Activated CD4-positive, alpha-beta T cell treated with anti-CD3 and anti-CD28 coated beads for 36 hours (primary cell): ENCODE measurements at regions of chrX and their contacts with region 1.

Region 1: DNA sequence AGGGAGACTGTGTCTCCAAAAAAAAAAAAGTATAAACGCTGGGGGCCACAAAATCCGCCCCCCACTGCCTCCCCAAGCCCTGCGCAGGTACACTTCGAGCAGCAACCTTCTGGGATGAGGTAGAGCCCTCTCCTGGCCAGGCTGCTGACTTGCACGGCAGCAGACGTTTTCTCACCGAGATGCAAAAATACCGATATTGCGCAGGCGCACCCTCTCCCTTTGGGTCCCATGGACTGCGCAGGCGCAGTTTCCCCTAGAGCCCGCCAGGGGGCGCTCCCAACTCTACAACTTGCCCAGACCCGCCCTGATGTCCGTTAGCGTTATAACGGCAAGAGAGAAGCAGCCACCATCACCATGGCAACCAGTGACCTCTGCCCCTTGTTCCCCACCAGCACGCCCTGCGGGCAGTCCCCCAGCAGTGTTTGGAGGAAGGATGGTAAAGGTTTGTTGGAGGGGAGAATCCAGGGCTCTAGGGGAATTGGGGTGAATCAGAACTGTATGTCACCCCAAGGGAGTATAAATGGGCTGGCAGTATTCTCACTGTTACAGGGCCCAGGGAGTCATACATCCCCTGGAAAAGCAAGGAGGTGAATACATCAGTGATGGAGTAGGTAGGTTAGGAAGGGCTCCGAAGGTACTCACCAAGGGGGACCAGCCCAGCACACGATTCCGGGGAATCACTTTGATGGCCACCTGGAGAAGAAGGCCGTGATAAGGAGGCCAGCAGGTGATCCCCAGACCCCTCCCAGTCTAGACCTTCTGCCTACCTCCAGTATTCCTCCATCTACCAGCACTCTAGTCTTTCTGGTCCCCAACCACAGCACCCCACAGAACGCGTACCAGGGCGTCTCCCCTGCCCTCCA is 1.5 kb downstream of the PIM2 start:
- DNase-seq: peak; percentile 92
- ATAC-seq: peak; percentile 34
- H3K4me3 Mint-ChIP-seq: peak overlapping the region; percentile 97
- H3K27ac Mint-ChIP-seq: peak overlapping the region; percentile 95
- H3K4me1 Mint-ChIP-seq: peaks cover 51% of the 10 kb centered on the region
- H3K27me3 Mint-ChIP-seq: no peaks in the 10 kb centered on the region

Region 2: GRCh38 chrX:47650164-47651042 is 1267.0 kb before region 1 on chrX and contains the start of gene ELK1:
- CTCF ChIA-PET with region 1: no interaction called
- POLR2A ChIA-PET with region 1: no interaction called
- intact Hi-C with region 1: loop called in 1 of 2 experiments (anchors 10 kb)
- DNase-seq: peak; percentile 93
- ATAC-seq: peak; percentile 95
- H3K4me3 Mint-ChIP-seq: peak within 1 kb of the TSS; percentile 92
- H3K27ac Mint-ChIP-seq: peak within 1 kb of the TSS; percentile 97
- H3K4me1 Mint-ChIP-seq: peaks cover 44% of the 10 kb centered on the region
- H3K27me3 Mint-ChIP-seq: no peaks in the 10 kb centered on the region
- total RNA-seq, gene ELK1: 96.8 to 117 TPM

Region 3: GRCh38 chrX:48676106-48676892 is 241.1 kb before region 1 on chrX:
- CTCF ChIA-PET with region 1: no interaction called
- POLR2A ChIA-PET with region 1: no interaction called
- intact Hi-C with region 1: loop called in 1 of 2 experiments (anchors 10 kb)
- DNase-seq: peak; percentile 92
- ATAC-seq: peak; percentile 95
- H3K4me3 Mint-ChIP-seq: peak overlapping the region; percentile 90
- H3K27ac Mint-ChIP-seq: peak overlapping the region; percentile 91
- H3K4me1 Mint-ChIP-seq: peaks cover 19% of the 10 kb centered on the region
- H3K27me3 Mint-ChIP-seq: no peaks in the 10 kb centered on the region

Region 4: GRCh38 chrX:48776818-48777439 is 140.4 kb before region 1 on chrX:
- CTCF ChIA-PET with region 1: no interaction called
- POLR2A ChIA-PET with region 1: no interaction called
- intact Hi-C with region 1: no loop called
- DNase-seq: no peak
- ATAC-seq: no peak
- H3K4me3 Mint-ChIP-seq: no peak overlapping the region
- H3K27ac Mint-ChIP-seq: no peak overlapping the region
- H3K4me1 Mint-ChIP-seq: no peaks in the 10 kb centered on the region
- H3K27me3 Mint-ChIP-seq: no peaks in the 10 kb centered on the region

Region 5: GRCh38 chrX:48897621-48898306 is 19.6 kb before region 1 on chrX and contains the starts of genes PQBP1 and TIMM17B:
- CTCF ChIA-PET with region 1: interaction called, 4 read pairs
- POLR2A ChIA-PET with region 1: interaction called, 14 read pairs
- intact Hi-C with region 1: loop called (anchors 1 kb)
- DNase-seq: peak; percentile 92
- ATAC-seq: peak; percentile 94
- H3K4me3 Mint-ChIP-seq: peak within 1 kb of the TSS; percentile 81
- H3K27ac Mint-ChIP-seq: peak within 1 kb of the TSS; percentile 94
- H3K4me1 Mint-ChIP-seq: peaks cover 19% of the 10 kb centered on the region
- H3K27me3 Mint-ChIP-seq: no peaks in the 10 kb centered on the region
- total RNA-seq, gene PQBP1: 73.4 to 75.3 TPM
- total RNA-seq, gene TIMM17B: 54.2 to 58.9 TPM

Region 6: DNA sequence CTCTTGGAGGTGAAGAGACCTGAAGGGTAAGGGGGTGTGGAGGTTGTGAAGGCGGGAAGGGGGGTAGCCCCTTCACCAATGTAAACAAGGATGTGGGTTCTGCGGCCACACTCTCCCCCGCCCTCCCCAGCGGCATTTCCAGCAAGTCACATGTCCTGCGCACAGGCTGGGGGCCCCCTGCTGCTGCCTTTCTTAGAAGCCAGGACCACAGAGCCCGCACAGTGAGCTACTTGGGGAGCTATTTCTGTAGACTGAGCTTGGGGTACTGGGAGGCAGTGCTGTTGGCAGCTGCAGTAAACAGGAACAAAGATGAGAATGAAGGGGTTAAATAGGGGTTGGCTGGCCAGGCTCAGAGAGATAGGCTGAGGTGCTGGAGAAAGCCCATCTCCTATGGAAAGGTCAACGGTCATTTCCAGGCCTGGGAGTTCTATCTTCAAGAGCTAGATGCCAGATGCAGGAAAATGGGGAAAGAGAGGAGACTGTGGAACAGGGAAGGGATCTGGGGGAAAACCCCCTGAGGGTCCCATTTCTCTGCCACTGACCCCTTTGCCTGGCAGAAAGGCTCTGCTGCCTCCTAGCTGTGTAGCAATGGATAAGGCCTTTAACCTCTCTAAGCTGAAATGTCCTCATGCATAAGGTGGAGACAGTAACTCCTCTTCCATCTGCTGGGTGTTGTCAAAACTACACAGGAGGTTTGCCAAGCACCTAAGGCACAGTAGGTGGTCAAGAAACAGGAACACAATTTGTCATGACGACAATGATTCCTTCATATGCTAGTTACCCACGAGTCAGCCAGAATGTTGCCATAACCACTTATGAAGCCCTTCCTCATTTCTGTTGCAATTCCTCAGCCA is 19.9 kb after region 1 on chrX:
- CTCF ChIA-PET with region 1: interaction called, 17 read pairs
- POLR2A ChIA-PET with region 1: interaction called, 86 read pairs
- intact Hi-C with region 1: loop called (anchors 1 kb)
- DNase-seq: peak; percentile 93
- ATAC-seq: peak; percentile 61
- H3K4me3 Mint-ChIP-seq: peak overlapping the region; percentile 64
- H3K27ac Mint-ChIP-seq: peak overlapping the region; percentile 96
- H3K4me1 Mint-ChIP-seq: peaks cover 81% of the 10 kb centered on the region
- H3K27me3 Mint-ChIP-seq: no peaks in the 10 kb centered on the region

Region 7: DNA sequence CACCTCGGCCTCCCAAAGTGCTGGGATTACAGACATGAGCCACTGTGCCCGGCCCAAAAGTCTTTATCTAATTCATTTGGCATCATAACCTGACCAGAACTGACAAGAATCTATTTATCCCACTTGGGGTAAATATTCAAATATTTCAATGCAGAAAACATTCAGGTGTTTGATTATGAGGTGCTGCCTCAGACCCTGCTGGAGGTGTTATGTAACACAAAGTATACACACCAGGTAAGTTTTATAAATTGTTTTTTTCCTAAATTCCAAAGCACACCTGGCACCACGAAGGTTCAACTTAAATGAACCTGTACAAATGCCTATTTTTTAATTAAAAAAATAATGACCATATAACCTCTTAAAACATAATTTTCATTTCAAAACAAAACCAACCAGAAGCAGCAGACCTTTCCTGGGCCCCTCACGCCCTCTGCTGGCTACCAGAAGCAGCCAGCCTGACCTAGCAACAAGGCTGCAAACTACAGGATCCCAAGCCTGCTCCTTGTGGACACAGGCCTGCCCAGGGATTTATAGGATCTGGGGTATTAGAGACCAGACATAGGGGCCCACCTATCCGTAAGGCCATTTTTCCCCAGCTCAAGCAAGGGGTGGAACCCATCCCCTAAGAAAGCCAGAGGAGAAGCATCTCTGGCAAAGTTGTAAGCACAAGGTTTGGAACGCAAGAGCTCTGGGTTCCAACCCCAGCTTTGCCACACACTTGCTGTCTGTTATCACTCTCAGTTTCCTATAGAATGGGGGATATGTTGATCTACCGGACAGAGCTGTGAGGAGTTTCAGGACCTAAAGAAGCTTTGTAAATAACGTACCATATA is 28.4 kb after region 1 on chrX:
- CTCF ChIA-PET with region 1: interaction called, 5 read pairs
- POLR2A ChIA-PET with region 1: interaction called, 39 read pairs
- intact Hi-C with region 1: no loop called
- DNase-seq: peak; percentile 71
- ATAC-seq: peak; percentile 42
- H3K4me3 Mint-ChIP-seq: peak overlapping the region; percentile 17
- H3K27ac Mint-ChIP-seq: peak overlapping the region; percentile 84
- H3K4me1 Mint-ChIP-seq: peaks cover 50% of the 10 kb centered on the region
- H3K27me3 Mint-ChIP-seq: no peaks in the 10 kb centered on the region

Region 8: DNA sequence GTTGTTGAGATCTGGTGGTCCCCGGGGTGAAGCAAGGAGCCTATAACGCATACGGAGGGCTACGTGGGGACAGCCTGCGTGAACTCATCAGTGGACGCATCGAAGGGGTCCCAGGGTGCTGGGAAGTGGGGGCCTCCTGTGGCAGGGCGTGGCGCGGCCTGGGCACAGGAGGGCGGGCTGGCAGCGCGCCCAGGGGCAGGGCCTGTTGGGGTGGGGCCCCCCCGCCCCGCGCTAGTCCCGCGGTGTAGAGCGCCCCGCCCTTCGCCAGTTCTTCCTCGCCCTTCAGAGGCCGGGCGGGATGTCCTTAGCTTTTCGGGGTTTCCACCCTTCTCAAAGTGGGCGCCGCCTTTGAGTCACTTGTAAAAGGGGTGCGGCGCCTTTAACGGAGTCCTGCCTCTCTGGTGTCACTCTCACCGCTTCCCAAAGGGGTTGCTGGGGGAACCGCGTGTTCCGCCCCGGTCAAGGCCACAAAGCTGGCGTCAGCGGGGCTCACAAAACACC is 255.0 kb after region 1 on chrX:
- CTCF ChIA-PET with region 1: no interaction called
- POLR2A ChIA-PET with region 1: no interaction called
- intact Hi-C with region 1: loop called in 1 of 2 experiments (anchors 5 kb)
- DNase-seq: peak; percentile 85
- ATAC-seq: peak; percentile 78
- H3K4me3 Mint-ChIP-seq: peak overlapping the region; percentile 88
- H3K27ac Mint-ChIP-seq: peak overlapping the region; percentile 93
- H3K4me1 Mint-ChIP-seq: peaks cover 31% of the 10 kb centered on the region
- H3K27me3 Mint-ChIP-seq: no peaks in the 10 kb centered on the region